ENCODE measurements at regions of chr16 and their contacts with region 1.

Region 1: GRCh38 chr16:3027945-3028712 is 4.3 kb downstream of the THOC6 start:
- DNase-seq: peak; percentile 58 to 78
- H3K4me3 ChIP-seq: no peak overlapping the region
- H3K27ac ChIP-seq: no peak overlapping the region
- H3K4me1 ChIP-seq: peaks cover 0 to 40% (median 30%) of the 10 kb centered on the region in 4 donors
- H3K27me3 ChIP-seq: peaks cover 0 to 38% of the 10 kb centered on the region in 2 donors
- CTCF ChIP-seq: peak; percentile 37 to 66

Region 2: GRCh38 chr16:2980227-2981086 is 47.7 kb before region 1 on chr16 and contains the start of gene PKMYT1:
- intact Hi-C with region 1: no loop called
- DNase-seq: peak; percentile 80 to 94
- H3K4me3 ChIP-seq: peak within 1 kb of the TSS; percentile 72 to 75
- H3K27ac ChIP-seq: peak within 1 kb of the TSS; percentile 82 to 86
- H3K4me1 ChIP-seq: peaks cover 0 to 38% (median 30%) of the 10 kb centered on the region in 4 donors
- H3K27me3 ChIP-seq: peaks cover 0 to 35% of the 10 kb centered on the region in 2 donors
- CTCF ChIP-seq: no peak

Region 3: DNA sequence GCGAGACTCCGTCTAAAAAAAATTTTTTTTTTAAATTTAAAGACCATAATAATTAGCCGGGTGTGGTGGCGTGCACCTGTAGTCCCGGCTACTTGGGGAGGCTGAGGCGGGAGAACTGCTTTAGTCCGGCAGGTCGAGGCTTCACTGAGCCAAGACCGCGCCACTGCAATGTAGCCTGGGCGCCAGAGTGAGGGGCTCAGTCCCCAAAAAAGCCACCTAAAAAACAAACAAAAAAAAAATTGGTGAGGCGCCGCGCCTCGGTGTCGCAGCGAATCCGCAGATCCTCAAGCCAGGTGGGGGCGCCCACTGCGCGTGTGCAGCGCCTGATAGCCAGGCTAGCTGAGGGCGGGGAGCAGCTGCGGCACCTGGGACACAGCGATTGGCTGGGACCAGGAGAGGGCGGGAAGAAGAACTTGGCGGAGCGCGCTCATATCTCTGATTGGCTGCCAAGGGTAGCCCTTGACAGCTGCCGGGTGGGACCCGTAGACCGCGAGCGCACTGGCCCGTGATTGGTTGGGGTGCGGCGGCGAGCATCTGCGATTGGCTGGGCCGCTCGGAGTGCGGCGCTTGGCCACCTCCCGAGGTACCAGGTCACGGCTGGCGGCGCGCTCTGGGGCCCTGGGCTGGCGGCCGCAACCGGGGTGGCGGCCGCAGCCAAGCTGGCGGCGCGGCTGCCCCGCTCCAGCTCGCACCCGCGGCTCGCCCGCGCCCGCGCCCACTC is 24.4 kb before region 1 on chr16:
- intact Hi-C with region 1: loop called (anchors 2 kb)
- DNase-seq: peak; percentile 91 to 97
- H3K4me3 ChIP-seq: peak overlapping the region; percentile 19 to 35
- H3K27ac ChIP-seq: no peak overlapping the region
- H3K4me1 ChIP-seq: peaks cover 0 to 5% (median 4%) of the 10 kb centered on the region in 4 donors
- H3K27me3 ChIP-seq: peaks cover 0 to 64% of the 10 kb centered on the region in 2 donors
- CTCF ChIP-seq: peak; percentile 40 to 51